PC-9 (cell line): ENCODE measurements at regions of chr18 and their contacts with region 1.

Region 1: GRCh38 chr18:7272311-7273049 is 41.6 kb downstream of the LRRC30 start:
- DNase-seq: peak; percentile 39 to 50
- H3K4me3 ChIP-seq: no peak overlapping the region
- H3K27ac ChIP-seq: no peak overlapping the region
- H3K4me1 ChIP-seq: no peaks in the 10 kb centered on the region
- H3K27me3 ChIP-seq: peaks cover 11% of the 10 kb centered on the region
- CTCF ChIP-seq: peak; percentile 67

Region 2: GRCh38 chr18:7403950-7404349 is 131.5 kb after region 1 on chr18:
- CTCF ChIA-PET with region 1: no interaction called
- POLR2A ChIA-PET with region 1: no interaction called
- intact Hi-C with region 1: no loop called
- DNase-seq: no peak
- H3K4me3 ChIP-seq: no peak overlapping the region
- H3K27ac ChIP-seq: no peak overlapping the region
- H3K4me1 ChIP-seq: no peaks in the 10 kb centered on the region
- H3K27me3 ChIP-seq: peaks cover 13% of the 10 kb centered on the region; the same call in 1 of the 2 replicates
- CTCF ChIP-seq: no peak

Region 3: DNA sequence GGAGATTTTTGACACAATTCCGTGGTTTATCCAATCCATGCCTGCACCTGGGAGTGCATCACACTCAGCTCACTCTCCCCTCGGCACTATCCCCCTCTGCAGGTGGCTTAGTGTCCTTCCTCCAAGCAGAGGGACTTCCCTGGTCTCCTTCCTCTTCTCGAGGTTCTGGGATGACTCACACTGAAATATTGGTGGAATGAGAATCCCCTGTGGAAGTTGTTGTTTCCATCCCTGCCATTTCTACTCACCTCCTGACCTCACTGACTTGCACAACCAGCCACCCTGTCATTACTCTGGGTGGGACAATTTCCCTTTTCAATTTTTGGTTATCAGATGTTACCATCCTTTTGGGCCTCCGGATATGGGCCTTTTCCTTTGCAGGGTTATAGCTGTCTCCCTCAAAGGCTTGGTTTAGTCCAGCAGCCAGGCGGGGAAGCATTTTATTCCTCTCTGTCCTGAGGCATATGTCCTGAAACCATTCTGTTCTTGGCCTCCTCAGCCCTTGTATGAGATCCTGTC is 354.5 kb after region 1 on chr18:
- CTCF ChIA-PET with region 1: no interaction called
- POLR2A ChIA-PET with region 1: no interaction called
- intact Hi-C with region 1: loop called (anchors 2 kb)
- DNase-seq: peak; percentile 52 to 84
- H3K4me3 ChIP-seq: peak overlapping the region; percentile 16; the same call in 1 of the 2 replicates
- H3K27ac ChIP-seq: peak overlapping the region; percentile 53
- H3K4me1 ChIP-seq: peaks cover 23% of the 10 kb centered on the region
- H3K27me3 ChIP-seq: no peaks in the 10 kb centered on the region
- CTCF ChIP-seq: peak; percentile 58

Region 4: GRCh38 chr18:8121942-8122480 is 849.5 kb after region 1 on chr18:
- CTCF ChIA-PET with region 1: no interaction called
- POLR2A ChIA-PET with region 1: no interaction called
- intact Hi-C with region 1: loop called (anchors 5 kb)
- DNase-seq: peak; percentile 71 to 81
- H3K4me3 ChIP-seq: no peak overlapping the region
- H3K27ac ChIP-seq: peak overlapping the region; percentile 70
- H3K4me1 ChIP-seq: peaks cover 69% of the 10 kb centered on the region
- H3K27me3 ChIP-seq: no peaks in the 10 kb centered on the region
- CTCF ChIP-seq: no peak